CD8-positive, alpha-beta memory T cell (primary cell): ENCODE measurements at regions of chr1 and their contacts with region 1.

Region 1: DNA sequence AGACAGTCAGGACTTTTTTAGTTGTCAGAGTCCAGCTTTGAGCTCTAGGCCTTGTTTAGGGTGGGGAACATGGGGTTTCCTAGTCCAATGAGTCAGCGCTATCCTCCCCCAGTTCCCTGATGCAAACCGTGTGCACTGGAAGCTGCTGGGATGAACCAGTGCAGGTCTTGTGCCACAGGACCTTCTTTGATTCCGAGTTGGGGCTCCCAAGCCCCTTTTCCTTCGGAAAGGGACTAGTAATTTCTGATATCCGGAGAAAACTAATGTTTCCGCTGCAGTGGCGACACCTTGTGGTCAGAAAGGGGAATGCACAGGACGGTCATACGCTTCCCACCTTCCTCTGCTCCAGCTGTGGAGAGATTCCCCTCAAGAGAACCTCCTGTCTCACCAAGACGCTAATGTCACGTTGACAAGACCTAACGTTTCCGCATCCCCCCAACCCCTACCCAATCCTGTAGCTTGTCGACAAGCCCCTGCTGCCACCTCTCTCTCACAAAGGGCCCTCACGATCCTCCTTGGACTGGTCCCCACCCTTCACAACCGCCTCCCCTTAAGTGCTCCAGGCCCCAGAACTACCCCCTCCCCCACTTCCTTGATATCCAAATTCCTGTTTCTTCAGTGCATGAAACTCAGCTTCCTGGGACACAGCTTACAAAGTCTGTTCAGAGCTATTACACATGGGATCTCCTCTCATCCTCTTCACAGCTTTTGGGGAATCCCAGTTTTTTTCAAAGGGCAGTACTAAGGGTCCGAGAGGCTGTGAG is 30.9 kb downstream of the GPA33 start:
- DNase-seq: peak; percentile 49 to 78 (median 61)
- H3K4me3 ChIP-seq: no peak overlapping the region
- H3K4me3 Mint-ChIP-seq: peak overlapping the region in 3 of 7 donors; percentile 29 to 55 (median 38)
- H3K27ac ChIP-seq: no peak overlapping the region
- H3K27ac Mint-ChIP-seq: peak overlapping the region in 3 of 8 donors; percentile 0 to 81 (median 9)
- H3K4me1 ChIP-seq: peaks cover 4% of the 10 kb centered on the region
- H3K4me1 Mint-ChIP-seq: peaks cover 0 to 16% (median 0%) of the 10 kb centered on the region in 3 donors
- H3K27me3 ChIP-seq: no peaks in the 10 kb centered on the region
- H3K27me3 Mint-ChIP-seq: no peaks in the 10 kb centered on the region

Region 2: GRCh38 chr1:167043752-167044488 is 15.3 kb before region 1 on chr1:
- CTCF ChIA-PET with region 1: interaction called, 22 read pairs
- POLR2A ChIA-PET with region 1: no interaction called
- DNase-seq: peak; percentile 42 to 80 (median 60)
- H3K4me3 ChIP-seq: peak overlapping the region; percentile 58
- H3K4me3 Mint-ChIP-seq: peak overlapping the region; percentile 70 to 94 (median 90)
- H3K27ac ChIP-seq: no peak overlapping the region
- H3K27ac Mint-ChIP-seq: peak overlapping the region in 7 of 8 donors; percentile 48 to 91 (median 85)
- H3K4me1 ChIP-seq: no peaks in the 10 kb centered on the region
- H3K4me1 Mint-ChIP-seq: peaks cover 11 to 19% (median 17%) of the 10 kb centered on the region in 3 donors
- H3K27me3 ChIP-seq: no peaks in the 10 kb centered on the region
- H3K27me3 Mint-ChIP-seq: peaks cover 1 to 34% of the 10 kb centered on the region in 2 donors

Region 3: GRCh38 chr1:167082511-167083027 is 23.3 kb after region 1 on chr1:
- CTCF ChIA-PET with region 1: interaction called, 13 read pairs
- POLR2A ChIA-PET with region 1: no interaction called
- DNase-seq: no peak
- H3K4me3 ChIP-seq: no peak overlapping the region
- H3K4me3 Mint-ChIP-seq: no peak overlapping the region
- H3K27ac ChIP-seq: no peak overlapping the region
- H3K27ac Mint-ChIP-seq: no peak overlapping the region
- H3K4me1 ChIP-seq: peaks cover 17% of the 10 kb centered on the region
- H3K4me1 Mint-ChIP-seq: peaks cover 10 to 17% (median 14%) of the 10 kb centered on the region in 3 donors
- H3K27me3 ChIP-seq: no peaks in the 10 kb centered on the region
- H3K27me3 Mint-ChIP-seq: peaks cover 5 to 17% of the 10 kb centered on the region in 2 donors